Kidney (tissue), 22 donors: ENCODE measurements at regions of chr1 and their contacts with region 1.

Region 1: GRCh38 chr1:166910396-166910994 is 34.4 kb upstream of the TADA1 start:
- DNase-seq: peak in 4 of 5 donors; percentile 74 to 91 (median 84)
- H3K4me3 ChIP-seq: no peak overlapping the region
- H3K27ac ChIP-seq: no peak overlapping the region
- H3K4me1 ChIP-seq: no peaks in the 10 kb centered on the region
- H3K27me3 ChIP-seq: no peaks in the 10 kb centered on the region
- CTCF ChIP-seq: peak; percentile 83

Region 2: GRCh38 chr1:166432655-166433054 is 477.8 kb before region 1 on chr1:
- intact Hi-C with region 1: no loop called
- DNase-seq: no peak
- H3K4me3 ChIP-seq: no peak overlapping the region
- H3K27ac ChIP-seq: no peak overlapping the region
- H3K4me1 ChIP-seq: no peaks in the 10 kb centered on the region
- H3K27me3 ChIP-seq: no peaks in the 10 kb centered on the region
- CTCF ChIP-seq: no peak

Region 3: DNA sequence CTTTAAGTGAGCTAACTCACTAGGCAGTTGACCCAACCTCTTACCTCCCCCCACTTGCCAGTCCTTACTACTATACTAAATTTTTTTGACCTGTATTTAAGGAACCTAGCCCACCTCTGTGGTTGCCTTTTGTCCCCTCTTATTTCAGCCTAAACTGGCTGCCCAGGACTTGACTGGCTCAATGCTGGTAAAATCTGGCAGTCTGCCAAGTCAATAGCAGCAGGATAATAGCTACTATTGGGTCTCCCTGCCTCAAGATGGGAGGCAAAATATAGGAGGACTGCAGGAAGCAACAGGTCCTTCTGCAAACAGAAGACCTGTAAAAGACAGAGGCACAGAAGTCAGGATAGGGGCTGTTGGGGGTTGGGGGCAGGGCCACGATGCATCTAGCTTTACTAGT is 215.4 kb before region 1 on chr1:
- intact Hi-C with region 1: no loop called
- DNase-seq: no peak
- H3K4me3 ChIP-seq: no peak overlapping the region
- H3K27ac ChIP-seq: no peak overlapping the region
- H3K4me1 ChIP-seq: no peaks in the 10 kb centered on the region
- H3K27me3 ChIP-seq: no peaks in the 10 kb centered on the region
- CTCF ChIP-seq: no peak

Region 4: DNA sequence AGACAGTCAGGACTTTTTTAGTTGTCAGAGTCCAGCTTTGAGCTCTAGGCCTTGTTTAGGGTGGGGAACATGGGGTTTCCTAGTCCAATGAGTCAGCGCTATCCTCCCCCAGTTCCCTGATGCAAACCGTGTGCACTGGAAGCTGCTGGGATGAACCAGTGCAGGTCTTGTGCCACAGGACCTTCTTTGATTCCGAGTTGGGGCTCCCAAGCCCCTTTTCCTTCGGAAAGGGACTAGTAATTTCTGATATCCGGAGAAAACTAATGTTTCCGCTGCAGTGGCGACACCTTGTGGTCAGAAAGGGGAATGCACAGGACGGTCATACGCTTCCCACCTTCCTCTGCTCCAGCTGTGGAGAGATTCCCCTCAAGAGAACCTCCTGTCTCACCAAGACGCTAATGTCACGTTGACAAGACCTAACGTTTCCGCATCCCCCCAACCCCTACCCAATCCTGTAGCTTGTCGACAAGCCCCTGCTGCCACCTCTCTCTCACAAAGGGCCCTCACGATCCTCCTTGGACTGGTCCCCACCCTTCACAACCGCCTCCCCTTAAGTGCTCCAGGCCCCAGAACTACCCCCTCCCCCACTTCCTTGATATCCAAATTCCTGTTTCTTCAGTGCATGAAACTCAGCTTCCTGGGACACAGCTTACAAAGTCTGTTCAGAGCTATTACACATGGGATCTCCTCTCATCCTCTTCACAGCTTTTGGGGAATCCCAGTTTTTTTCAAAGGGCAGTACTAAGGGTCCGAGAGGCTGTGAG is 148.7 kb after region 1 on chr1:
- intact Hi-C with region 1: loop called (anchors 10 kb)
- DNase-seq: peak in 4 of 5 donors; percentile 80 to 84 (median 82)
- H3K4me3 ChIP-seq: peak overlapping the region in 1 of 3 donors; percentile 2
- H3K27ac ChIP-seq: no peak overlapping the region
- H3K4me1 ChIP-seq: no peaks in the 10 kb centered on the region
- H3K27me3 ChIP-seq: no peaks in the 10 kb centered on the region
- CTCF ChIP-seq: peak; percentile 94